Activated T-helper 2 cell treated with anti-CD3 and anti-CD28 coated beads, Interferon-gamma antibody, Interleukin-2, Interleukin-4, amounts not matched to agents 10 μg/mL and 5 μg/mL and 100 μg/mL, durations not matched to agents 14 hours and 24 hours and 36 hours (primary cell): ENCODE measurements at regions of chr17 and their contacts with region 1.

Region 1: GRCh38 chr17:75877752-75878173 is 618 bp downstream of the TRIM47 start:
- DNase-seq: peak; percentile 73
- H3K4me3 Mint-ChIP-seq: peak overlapping the region; percentile 92
- H3K27ac Mint-ChIP-seq: peak overlapping the region; percentile 93
- H3K4me1 Mint-ChIP-seq: peaks cover 36% of the 10 kb centered on the region
- H3K27me3 Mint-ChIP-seq: peaks cover 8% of the 10 kb centered on the region

Region 2: DNA sequence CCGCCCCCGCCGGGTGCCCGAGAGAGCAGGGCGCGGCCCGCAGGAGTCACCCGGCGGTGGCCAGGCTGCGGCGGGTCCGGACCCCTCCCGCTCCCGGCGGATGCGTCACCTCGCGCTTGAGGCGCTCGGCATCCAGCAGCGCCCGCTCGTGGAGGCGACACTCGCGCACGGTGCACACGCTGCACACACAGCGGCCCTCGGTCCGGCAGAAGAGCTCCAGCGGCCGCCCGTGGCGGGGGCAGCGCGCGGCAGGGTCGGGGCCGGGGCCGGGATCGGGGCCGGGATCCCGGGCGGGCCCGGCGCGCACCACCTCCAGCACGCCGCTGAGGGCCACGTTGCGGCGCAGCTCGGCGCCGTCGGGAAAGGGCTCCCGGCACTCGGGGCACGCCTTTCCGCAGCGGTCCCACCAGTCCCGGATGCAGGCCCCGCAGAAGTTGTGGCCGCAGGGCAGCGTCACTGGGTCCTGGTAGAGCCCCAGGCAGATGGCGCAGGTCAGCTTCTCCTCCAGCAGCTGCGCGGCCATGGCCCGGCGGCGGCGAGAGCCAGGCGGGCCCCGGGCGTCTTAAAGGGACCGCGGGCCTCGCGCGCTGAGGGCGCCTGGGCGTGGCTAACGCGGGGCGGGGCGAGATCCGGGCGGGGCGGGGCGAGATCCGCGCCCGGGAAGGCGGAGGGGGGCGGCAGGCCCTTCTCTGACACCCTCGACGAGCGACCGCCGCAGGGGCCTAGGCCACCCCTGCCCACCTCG is 18.8 kb after region 1 on chr17 and contains the start of gene TRIM65:
- intact Hi-C with region 1: loop called (anchors 2 kb)
- DNase-seq: peak; percentile 73
- H3K4me3 Mint-ChIP-seq: peak within 1 kb of the TSS; percentile 85
- H3K27ac Mint-ChIP-seq: peak within 1 kb of the TSS; percentile 82
- H3K4me1 Mint-ChIP-seq: peaks cover 13% of the 10 kb centered on the region
- H3K27me3 Mint-ChIP-seq: no peaks in the 10 kb centered on the region
- total RNA-seq, gene TRIM65: 42.8 and 45.6 TPM in 2 replicates

Region 3: DNA sequence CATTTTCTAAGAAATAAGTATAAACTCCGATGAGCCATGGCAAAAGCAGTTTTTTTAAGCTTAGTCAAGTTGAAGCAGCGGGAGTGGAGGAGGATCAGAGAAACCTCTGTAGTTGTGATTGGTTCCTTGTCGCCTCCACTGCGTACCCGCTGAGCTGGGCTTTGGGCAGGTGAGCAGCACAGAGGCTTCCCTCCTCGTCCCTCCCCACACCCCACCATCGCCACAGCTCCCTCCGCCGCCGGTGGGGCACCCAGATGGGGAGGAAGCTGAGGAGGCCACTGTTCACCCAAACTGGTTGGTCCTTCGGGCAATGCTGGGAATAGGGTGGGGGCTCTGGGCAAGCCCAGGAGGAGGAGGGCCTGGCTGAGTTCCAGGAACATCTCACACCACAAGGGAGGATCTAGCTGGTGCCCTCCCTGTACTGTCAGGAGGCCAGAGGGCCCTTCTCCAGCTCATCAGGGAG is 32.1 kb after region 1 on chr17:
- intact Hi-C with region 1: no loop called
- DNase-seq: no peak
- H3K4me3 Mint-ChIP-seq: no peak overlapping the region
- H3K27ac Mint-ChIP-seq: no peak overlapping the region
- H3K4me1 Mint-ChIP-seq: peaks cover 5% of the 10 kb centered on the region
- H3K27me3 Mint-ChIP-seq: no peaks in the 10 kb centered on the region